ENCODE measurements at regions of chr22 and their contacts with region 1.

Region 1: GRCh38 chr22:18024276-18024947 is at the start of gene MICAL3:
- DNase-seq: peak; percentile 92
- H3K4me3 Mint-ChIP-seq: peak within 1 kb of the TSS; percentile 86
- H3K27ac Mint-ChIP-seq: peak within 1 kb of the TSS; percentile 83
- H3K4me1 Mint-ChIP-seq: peaks cover 13% of the 10 kb centered on the region
- H3K27me3 Mint-ChIP-seq: peaks cover 63% of the 10 kb centered on the region
- total RNA-seq, gene MICAL3: 47.0 and 51.2 TPM in 2 replicates

Region 2: GRCh38 chr22:17523925-17524324 is 500.5 kb before region 1 on chr22:
- intact Hi-C with region 1: no loop called
- DNase-seq: no peak
- H3K4me3 Mint-ChIP-seq: no peak overlapping the region
- H3K27ac Mint-ChIP-seq: no peak overlapping the region
- H3K4me1 Mint-ChIP-seq: peaks cover 4% of the 10 kb centered on the region
- H3K27me3 Mint-ChIP-seq: peaks cover 14% of the 10 kb centered on the region

Region 3: DNA sequence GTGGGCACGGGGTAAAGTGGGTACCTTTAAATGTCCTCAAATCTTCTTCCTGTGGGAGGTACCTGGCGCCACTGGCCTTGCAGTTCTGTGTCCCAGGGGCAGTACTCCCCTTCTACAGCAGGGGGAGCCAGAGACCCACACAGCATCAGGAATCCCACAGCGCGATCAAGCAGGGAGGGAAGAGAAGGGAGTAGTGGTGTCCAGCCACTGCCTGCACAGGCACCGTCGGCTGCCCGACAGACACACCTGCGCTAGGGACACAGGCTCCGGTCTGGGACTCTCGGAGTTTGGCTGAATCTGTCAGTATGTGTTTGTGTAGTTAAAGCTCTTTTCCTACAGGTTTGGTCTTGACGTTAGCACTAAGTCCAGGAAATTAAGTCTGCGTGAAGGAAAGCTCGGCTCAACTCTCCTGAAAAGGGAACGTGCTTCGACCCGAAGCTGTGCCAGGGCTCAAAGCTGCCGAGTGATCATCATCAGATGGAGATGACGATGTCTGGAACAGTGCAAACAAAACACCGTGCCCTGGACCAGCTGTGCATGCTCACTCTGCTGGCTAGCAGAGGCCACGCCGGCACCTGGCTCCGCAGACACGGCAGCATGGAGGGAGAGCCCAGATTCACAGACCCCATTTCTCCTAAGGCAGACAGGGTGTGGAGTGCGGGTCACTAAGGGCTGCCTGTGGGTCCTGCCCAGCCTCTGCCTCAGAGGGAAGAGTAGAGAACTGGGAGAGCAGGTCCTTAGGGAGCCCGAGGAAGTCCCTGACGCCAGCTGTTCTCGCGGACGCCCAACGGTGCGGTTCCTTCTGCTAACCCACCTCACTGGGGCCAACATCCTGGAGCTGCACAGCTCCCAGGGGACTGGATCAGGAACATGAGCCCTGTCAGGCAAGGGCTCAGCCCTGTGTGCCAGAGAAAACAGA is 194.1 kb before region 1 on chr22:
- intact Hi-C with region 1: loop called (anchors 1 kb)
- DNase-seq: peak; percentile 95
- H3K4me3 Mint-ChIP-seq: no peak overlapping the region
- H3K27ac Mint-ChIP-seq: no peak overlapping the region
- H3K4me1 Mint-ChIP-seq: peaks cover 5% of the 10 kb centered on the region
- H3K27me3 Mint-ChIP-seq: no peaks in the 10 kb centered on the region

Region 4: GRCh38 chr22:17910561-17911311 is 113.7 kb before region 1 on chr22:
- intact Hi-C with region 1: loop called (anchors 10 kb)
- DNase-seq: no peak
- H3K4me3 Mint-ChIP-seq: no peak overlapping the region
- H3K27ac Mint-ChIP-seq: no peak overlapping the region
- H3K4me1 Mint-ChIP-seq: no peaks in the 10 kb centered on the region
- H3K27me3 Mint-ChIP-seq: no peaks in the 10 kb centered on the region

Region 5: GRCh38 chr22:17972385-17973181 is 51.8 kb before region 1 on chr22:
- intact Hi-C with region 1: loop called (anchors 10 kb)
- DNase-seq: no peak
- H3K4me3 Mint-ChIP-seq: no peak overlapping the region
- H3K27ac Mint-ChIP-seq: no peak overlapping the region
- H3K4me1 Mint-ChIP-seq: peaks cover 8% of the 10 kb centered on the region
- H3K27me3 Mint-ChIP-seq: no peaks in the 10 kb centered on the region

Region 6: GRCh38 chr22:18012531-18012930 is 11.9 kb before region 1 on chr22:
- intact Hi-C with region 1: no loop called
- DNase-seq: no peak
- H3K4me3 Mint-ChIP-seq: no peak overlapping the region
- H3K27ac Mint-ChIP-seq: no peak overlapping the region
- H3K4me1 Mint-ChIP-seq: no peaks in the 10 kb centered on the region
- H3K27me3 Mint-ChIP-seq: peaks cover 7% of the 10 kb centered on the region

Measured in activated CD4-positive, alpha-beta T cell treated with anti-CD3 and anti-CD28 coated beads, Interleukin-2, amount 10 ng/mL, durations not matched to agents 24 days and 14 days (primary cell).